Heart left ventricle (tissue), 16 donors: ENCODE measurements at regions of chr3 and their contacts with region 1.

Region 1: GRCh38 chr3:13548696-13549622 is at the start of gene FBLN2:
- DNase-seq: peak; percentile 51 to 76 (median 63)
- ATAC-seq: peak; percentile 13 to 88 (median 78)
- H3K4me3 ChIP-seq: peak within 1 kb of the TSS; percentile 4 to 69 (median 52)
- H3K27ac ChIP-seq: peak within 1 kb of the TSS; percentile 47 to 81 (median 72)
- H3K4me1 ChIP-seq: peaks cover 0 to 72% (median 21%) of the 10 kb centered on the region in 12 donors
- H3K27me3 ChIP-seq: peaks cover 0 to 16% (median 5%) of the 10 kb centered on the region in 9 donors
- CTCF ChIP-seq: no peak
- POLR2A ChIP-seq: peak in 1 of 2 donors; percentile 66
- total RNA-seq, gene FBLN2: 31.3 to 118 (median 47.8) TPM

Region 2: GRCh38 chr3:13495921-13496723 is 52.8 kb before region 1 on chr3:
- intact Hi-C with region 1: loop called in 2 of 10 experiments (anchors 5 kb)
- DNase-seq: peak; percentile 70 to 80 (median 73)
- ATAC-seq: peak; percentile 72 to 95 (median 90)
- H3K4me3 ChIP-seq: no peak overlapping the region
- H3K27ac ChIP-seq: peak overlapping the region in 1 of 12 donors; percentile 3
- H3K4me1 ChIP-seq: peaks cover 0 to 14% (median 9%) of the 10 kb centered on the region in 12 donors
- H3K27me3 ChIP-seq: no peaks in the 10 kb centered on the region
- CTCF ChIP-seq: peak; percentile 83 to 98 (median 94)
- POLR2A ChIP-seq: no peak

Region 3: DNA sequence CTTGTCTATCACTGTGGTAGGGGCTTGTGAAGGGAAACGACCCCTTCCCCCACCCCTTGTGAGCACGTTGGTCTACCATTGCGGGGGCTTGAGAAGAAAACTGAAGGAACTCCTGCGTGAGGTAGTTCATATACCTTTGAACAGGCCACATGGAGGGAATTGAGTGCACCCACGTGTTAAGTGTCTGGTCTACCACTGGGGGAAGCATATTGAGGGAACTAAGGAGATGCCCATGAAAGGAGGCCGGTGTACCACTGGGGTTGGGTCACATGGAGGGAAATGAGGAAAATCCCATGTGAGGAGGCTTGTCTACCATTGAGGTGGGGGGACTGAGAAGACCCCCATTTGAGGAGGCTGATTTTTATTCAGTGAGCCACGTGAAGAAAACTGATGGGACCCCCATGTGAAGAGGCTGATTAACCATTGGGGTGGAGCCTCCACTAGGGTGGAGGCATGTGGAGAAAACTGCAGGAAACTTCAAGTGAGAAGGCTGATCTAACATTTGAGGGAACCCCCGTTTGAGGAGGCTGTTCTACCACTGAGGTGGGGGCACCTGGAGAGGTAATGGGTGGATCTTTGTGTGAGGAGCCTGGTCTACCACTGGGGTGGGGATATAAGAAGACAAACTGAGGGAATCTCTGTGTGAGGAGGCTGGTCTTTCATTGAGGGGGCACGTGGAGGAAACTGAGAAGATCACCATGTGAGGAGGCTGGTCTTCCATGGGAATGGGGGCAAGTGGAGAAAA is 163.1 kb after region 1 on chr3:
- intact Hi-C with region 1: no loop called
- DNase-seq: peak in 3 of 5 donors; percentile 1 to 9 (median 3)
- ATAC-seq: no peak
- H3K4me3 ChIP-seq: no peak overlapping the region
- H3K27ac ChIP-seq: no peak overlapping the region
- H3K4me1 ChIP-seq: no peaks in the 10 kb centered on the region
- H3K27me3 ChIP-seq: no peaks in the 10 kb centered on the region
- CTCF ChIP-seq: no peak
- POLR2A ChIP-seq: no peak